AG04450 (cell line): ENCODE measurements at regions of chr12 and their contacts with region 1.

Region 1: DNA sequence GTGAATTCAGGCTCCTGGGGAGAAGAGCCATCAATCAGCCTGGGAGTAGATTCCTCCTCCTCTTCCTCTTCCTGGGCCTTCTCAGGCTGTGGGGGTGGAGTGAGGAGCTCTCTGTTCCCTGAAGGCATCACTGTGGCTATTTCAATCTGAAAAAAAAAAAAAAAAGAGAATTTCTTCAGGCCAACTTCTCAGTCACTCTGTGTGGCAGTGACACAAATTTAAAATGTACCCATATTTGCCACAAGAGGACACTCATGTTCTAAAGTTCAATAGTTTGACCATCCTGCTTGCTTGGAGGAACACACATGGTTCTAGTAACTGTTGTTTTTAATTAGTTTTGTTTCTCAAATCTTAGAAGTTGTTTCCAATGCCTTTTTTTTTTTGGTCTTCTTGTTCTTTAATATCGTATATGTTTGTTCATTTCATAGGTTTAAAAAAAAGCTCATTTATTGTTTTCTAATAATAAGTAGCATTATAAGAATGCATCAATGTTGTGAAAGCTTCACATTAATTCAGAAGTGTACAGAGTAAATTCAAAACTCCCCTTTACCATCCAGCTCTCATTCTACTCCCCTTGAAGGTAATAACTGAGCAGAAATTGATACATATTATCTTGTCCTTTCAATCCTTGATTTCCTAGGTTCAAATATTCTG is 23.3 kb upstream of the CCER1 start:
- DNase-seq: peak; percentile 56
- H3K4me3 ChIP-seq: no peak overlapping the region
- H3K27ac ChIP-seq: no peak overlapping the region
- H3K27me3 ChIP-seq: no peaks in the 10 kb centered on the region
- CTCF ChIP-seq: peak; percentile 79

Region 2: DNA sequence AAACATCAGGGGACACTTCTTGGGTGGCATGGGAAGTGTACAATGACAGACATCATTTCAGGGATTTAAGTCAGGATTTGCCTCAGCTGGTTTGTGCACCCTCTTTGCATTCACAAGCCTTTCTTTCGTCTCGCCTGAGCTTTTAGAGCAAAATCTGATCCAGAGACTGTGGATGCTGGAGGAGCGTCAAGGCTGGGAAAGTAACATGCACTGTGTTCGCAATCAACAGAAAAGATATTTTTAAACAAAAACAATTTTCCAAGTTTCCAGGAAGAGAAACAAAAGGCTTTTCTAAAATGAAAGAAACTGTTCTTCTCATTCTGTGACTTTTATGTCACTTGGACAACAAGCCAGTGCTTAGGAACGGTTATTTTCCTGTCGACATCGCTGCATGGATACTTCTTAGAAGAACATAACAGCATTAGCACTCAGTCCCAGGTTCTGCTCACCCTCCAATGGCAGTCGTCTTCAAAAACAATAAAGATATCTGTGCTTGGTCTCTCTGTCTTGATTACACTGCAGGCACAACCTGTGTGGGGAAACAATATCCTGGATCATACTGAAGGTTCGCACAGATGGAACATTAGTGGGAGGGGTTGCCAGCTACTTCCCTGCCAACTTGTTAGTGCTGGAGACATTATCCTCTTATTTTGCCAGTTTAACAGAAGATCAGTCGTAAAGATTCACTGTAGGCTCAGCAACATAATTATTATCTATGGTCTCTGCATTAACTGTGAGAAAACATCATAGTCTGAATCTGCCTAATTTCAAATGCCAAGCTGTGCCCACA is 866.3 kb before region 1 on chr12:
- CTCF ChIA-PET with region 1: no interaction called
- POLR2A ChIA-PET with region 1: no interaction called
- DNase-seq: no peak
- H3K4me3 ChIP-seq: no peak overlapping the region
- H3K27ac ChIP-seq: no peak overlapping the region
- H3K27me3 ChIP-seq: no peaks in the 10 kb centered on the region
- CTCF ChIP-seq: no peak

Region 3: GRCh38 chr12:91043408-91043807 is 65.2 kb after region 1 on chr12:
- CTCF ChIA-PET with region 1: no interaction called
- POLR2A ChIA-PET with region 1: no interaction called
- DNase-seq: no peak
- H3K4me3 ChIP-seq: no peak overlapping the region
- H3K27ac ChIP-seq: no peak overlapping the region
- H3K27me3 ChIP-seq: no peaks in the 10 kb centered on the region
- CTCF ChIP-seq: no peak

Region 4: DNA sequence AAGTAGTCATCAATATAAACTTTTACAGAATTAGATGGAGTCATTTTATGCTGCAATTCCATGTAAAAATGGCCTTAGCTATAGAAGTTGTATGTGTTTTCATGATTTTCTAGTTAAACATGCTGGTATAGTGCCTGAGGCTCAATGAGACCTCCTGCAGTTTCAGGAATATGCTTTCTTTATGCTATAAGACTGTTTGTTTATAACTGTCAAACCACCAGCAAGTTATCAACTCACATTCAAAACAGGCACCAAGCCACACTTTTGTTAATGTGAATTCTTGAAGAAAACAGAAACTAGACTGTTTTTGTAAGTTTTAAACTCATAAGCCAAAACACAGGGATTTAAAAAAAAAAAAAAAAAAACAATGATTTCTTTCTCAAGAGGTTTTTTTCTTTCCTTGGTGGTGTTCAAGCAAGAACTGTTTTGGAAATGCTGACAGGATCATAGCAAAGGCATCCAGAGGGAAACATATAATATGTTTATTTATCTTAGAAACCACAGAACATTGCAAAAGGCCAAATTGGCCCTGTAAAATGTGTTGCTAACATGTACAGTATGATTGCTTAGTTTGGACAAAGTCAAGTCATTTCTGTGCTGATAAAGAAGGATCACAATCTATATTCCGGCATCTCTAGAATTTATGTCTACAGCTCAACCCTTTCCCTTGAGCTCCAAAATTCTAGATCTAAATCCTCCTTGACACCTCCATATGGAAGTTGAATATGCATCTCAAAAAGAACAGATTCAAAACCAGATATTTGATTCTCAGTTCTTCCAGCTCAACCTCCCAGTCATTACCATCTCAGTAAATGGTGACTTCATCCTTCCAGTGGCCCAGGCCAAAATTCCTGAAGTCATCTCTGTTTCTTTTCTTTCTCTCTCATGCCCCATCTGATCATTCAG is 162.0 kb after region 1 on chr12:
- CTCF ChIA-PET with region 1: interaction called, 25 read pairs
- POLR2A ChIA-PET with region 1: no interaction called
- DNase-seq: peak; percentile 86
- H3K4me3 ChIP-seq: no peak overlapping the region
- H3K27ac ChIP-seq: peak overlapping the region; percentile 75
- H3K27me3 ChIP-seq: no peaks in the 10 kb centered on the region
- CTCF ChIP-seq: no peak

Region 5: GRCh38 chr12:91178139-91178561 is 199.9 kb after region 1 on chr12:
- CTCF ChIA-PET with region 1: interaction called, 80 read pairs
- POLR2A ChIA-PET with region 1: no interaction called
- DNase-seq: no peak
- H3K4me3 ChIP-seq: peak overlapping the region; percentile 53
- H3K27ac ChIP-seq: no peak overlapping the region
- H3K27me3 ChIP-seq: no peaks in the 10 kb centered on the region
- CTCF ChIP-seq: peak; percentile 66

Region 6: GRCh38 chr12:91332302-91332701 is 354.1 kb after region 1 on chr12:
- CTCF ChIA-PET with region 1: interaction called, 36 read pairs
- POLR2A ChIA-PET with region 1: no interaction called
- DNase-seq: no peak
- H3K4me3 ChIP-seq: no peak overlapping the region
- H3K27ac ChIP-seq: no peak overlapping the region
- H3K27me3 ChIP-seq: no peaks in the 10 kb centered on the region
- CTCF ChIP-seq: peak; percentile 35

Region 7: DNA sequence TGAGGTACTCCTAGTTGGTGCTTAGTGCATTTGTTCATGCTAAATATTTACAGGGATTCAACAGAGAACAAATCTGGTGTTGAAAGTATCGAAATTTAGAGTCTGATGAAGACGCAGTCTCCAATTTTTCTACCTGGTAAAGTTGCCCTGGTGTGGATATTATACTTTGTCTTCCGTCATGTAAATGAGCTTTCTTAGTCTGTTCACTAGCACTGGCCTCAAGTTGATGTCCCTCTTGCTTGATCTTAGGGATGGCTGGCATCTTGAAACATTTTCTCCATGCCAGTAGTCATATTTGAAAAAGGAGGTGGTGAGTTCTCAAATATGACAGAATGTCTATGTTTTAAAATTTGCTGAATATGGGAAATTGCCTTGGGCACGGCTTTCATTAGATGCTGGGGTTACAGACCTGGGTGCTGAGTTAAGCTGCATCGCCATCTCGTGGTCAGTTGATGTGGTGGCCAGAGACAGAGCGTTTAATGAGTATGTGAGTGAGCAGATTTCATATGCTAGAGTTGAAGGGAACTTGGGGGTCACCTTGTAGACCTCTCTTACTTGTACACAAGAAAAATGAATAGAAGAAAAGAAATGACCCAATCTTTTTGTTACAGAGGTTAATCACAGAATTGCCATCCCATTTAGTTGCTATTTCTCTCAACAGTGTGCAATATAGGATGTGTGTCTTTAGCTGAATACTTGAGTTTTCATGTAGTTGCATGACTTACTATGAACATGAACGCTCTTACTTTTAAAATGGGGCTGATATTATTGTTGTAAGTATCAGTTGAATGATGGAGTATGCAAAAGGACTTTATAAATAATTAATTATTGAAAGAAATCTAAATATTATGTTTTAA is 377.1 kb after region 1 on chr12:
- CTCF ChIA-PET with region 1: interaction called, 97 read pairs
- POLR2A ChIA-PET with region 1: no interaction called
- DNase-seq: peak; percentile 63
- H3K4me3 ChIP-seq: no peak overlapping the region
- H3K27ac ChIP-seq: no peak overlapping the region
- H3K27me3 ChIP-seq: no peaks in the 10 kb centered on the region
- CTCF ChIP-seq: peak; percentile 97